Activated CD4-positive, alpha-beta T cell treated with anti-CD3 and anti-CD28 coated beads for 36 hours (primary cell): ENCODE measurements at regions of chr1 and their contacts with region 1.

Region 1: DNA sequence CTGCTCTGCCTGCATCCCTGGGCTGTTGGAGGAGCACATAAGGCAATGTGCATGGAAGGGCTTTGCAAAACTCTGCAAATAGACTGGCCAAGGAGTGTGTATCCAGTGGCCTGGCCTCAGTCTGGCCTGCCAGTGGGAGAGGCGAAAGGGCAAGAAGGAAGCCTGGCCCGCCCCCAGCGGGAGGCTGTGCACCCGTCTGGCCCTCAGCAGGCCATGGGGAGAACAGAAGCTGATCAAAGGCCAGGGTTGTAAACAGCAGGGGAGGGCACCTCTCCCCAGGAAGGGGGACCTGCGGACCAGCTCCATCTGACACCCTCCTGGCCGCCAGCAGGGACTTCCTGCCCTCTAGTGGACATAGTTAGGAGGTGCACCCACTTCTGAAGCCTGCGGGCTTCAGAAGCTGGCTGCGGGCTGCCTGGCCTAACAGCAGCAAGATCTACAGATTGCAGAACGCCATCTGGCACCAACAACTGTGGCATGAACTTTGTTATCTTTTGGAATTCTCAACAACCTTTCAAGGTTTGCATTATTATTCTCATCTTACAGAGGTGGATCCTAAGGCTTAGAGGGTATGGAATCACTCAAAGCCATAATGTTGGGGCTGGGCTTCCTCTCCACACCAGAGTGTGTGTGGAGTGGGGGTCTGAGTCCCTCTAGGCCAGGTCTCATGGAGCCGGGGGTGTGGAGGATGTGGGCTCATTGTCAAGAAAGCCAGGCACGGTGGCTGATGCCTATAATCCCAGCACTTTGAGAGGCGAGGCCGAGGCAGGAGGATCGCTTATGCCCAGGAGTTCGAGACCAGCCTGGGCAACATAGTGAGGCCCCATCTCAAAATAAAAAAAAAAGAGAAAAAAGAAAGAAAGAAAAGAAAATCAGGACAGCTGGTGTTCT is 18.9 kb upstream of the CDK18 start:
- DNase-seq: peak; percentile 78
- ATAC-seq: peak; percentile 69
- H3K4me3 Mint-ChIP-seq: no peak overlapping the region
- H3K27ac Mint-ChIP-seq: no peak overlapping the region
- H3K4me1 Mint-ChIP-seq: peaks cover 10% of the 10 kb centered on the region
- H3K27me3 Mint-ChIP-seq: peaks cover 40% of the 10 kb centered on the region

Region 2: DNA sequence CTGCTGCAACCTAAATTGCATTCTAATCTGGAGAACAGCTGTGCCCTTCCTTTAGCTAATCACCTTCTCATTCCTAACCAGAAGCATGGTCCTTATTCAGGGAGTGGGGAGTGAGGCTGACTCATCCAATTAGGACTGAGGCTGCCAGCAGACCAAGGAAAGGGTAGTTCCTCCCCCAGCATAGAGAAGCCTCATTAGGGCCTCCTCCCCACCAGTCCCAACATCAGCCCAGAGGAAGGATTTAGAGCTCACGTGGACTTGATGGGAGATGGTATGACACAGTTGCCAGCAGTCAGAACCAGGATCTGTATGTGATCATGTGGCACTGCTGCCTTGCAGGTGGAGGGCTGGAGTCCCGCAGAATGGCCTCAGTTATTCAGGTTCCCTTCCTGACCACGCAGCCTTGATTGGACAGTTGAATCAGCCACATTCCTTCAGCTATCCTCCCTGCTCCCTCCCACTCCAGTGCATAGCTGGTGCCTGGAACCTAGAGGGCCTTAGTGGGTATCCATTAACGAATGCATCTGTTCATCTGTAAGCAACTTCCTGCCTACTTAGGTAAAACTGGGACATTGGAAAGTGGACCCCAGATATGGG is 136.6 kb before region 1 on chr1:
- CTCF ChIA-PET with region 1: interaction called, 82 read pairs
- POLR2A ChIA-PET with region 1: no interaction called
- intact Hi-C with region 1: loop called (anchors 1 kb)
- DNase-seq: no peak
- ATAC-seq: no peak
- H3K4me3 Mint-ChIP-seq: no peak overlapping the region
- H3K27ac Mint-ChIP-seq: no peak overlapping the region
- H3K4me1 Mint-ChIP-seq: peaks cover 5% of the 10 kb centered on the region
- H3K27me3 Mint-ChIP-seq: peaks cover 20% of the 10 kb centered on the region

Region 3: GRCh38 chr1:205396967-205397616 is 88.5 kb before region 1 on chr1:
- CTCF ChIA-PET with region 1: interaction called, 79 read pairs
- POLR2A ChIA-PET with region 1: no interaction called
- intact Hi-C with region 1: loop called (anchors 1 kb)
- DNase-seq: peak; percentile 38
- ATAC-seq: peak; percentile 68
- H3K4me3 Mint-ChIP-seq: no peak overlapping the region
- H3K27ac Mint-ChIP-seq: no peak overlapping the region
- H3K4me1 Mint-ChIP-seq: no peaks in the 10 kb centered on the region
- H3K27me3 Mint-ChIP-seq: peaks cover 6% of the 10 kb centered on the region

Region 4: GRCh38 chr1:205440476-205441317 is 44.9 kb before region 1 on chr1:
- CTCF ChIA-PET with region 1: interaction called, 23 read pairs
- POLR2A ChIA-PET with region 1: no interaction called
- intact Hi-C with region 1: loop called in 1 of 2 experiments (anchors 5 kb)
- DNase-seq: peak; percentile 87
- ATAC-seq: peak; percentile 99
- H3K4me3 Mint-ChIP-seq: peak overlapping the region; percentile 70
- H3K27ac Mint-ChIP-seq: peak overlapping the region; percentile 87
- H3K4me1 Mint-ChIP-seq: peaks cover 17% of the 10 kb centered on the region
- H3K27me3 Mint-ChIP-seq: no peaks in the 10 kb centered on the region

Region 5: GRCh38 chr1:205512059-205513045 is 26.8 kb after region 1 on chr1:
- CTCF ChIA-PET with region 1: interaction called, 16 read pairs
- POLR2A ChIA-PET with region 1: no interaction called
- intact Hi-C with region 1: no loop called
- DNase-seq: no peak
- ATAC-seq: no peak
- H3K4me3 Mint-ChIP-seq: no peak overlapping the region
- H3K27ac Mint-ChIP-seq: no peak overlapping the region
- H3K4me1 Mint-ChIP-seq: no peaks in the 10 kb centered on the region
- H3K27me3 Mint-ChIP-seq: no peaks in the 10 kb centered on the region

Region 6: DNA sequence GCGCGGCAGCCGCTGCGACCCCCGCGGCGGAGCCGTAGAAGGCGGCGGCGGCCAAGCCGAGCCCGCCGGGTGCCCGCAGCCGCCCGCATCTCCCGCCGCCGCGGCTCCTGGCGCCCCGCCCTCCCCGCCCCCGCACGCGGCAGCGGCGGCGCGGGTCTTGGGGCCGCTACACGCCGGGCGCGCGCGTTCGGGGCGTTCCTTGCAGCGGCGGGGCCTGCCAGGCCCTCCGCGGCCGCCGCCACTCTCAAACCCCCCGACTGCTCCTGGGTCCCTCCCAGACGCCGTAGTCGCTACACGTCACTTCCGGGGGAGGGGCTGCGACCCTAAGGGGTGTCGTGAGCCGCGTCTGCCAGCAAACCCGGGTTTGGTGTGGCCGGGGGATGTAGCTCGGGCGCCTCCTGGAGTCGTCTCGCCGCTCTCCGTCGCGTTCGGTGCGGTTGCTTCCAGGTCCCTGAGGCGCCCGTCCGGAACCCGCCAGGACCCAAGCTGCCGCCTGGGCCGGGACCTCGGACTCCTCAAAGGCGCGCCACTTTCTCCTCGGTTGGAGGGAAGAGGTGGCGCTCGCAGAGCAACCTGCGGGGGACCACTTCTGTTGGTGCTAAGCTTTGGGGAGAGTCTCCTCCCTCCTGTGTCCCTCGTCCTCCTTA is 146.3 kb after region 1 on chr1 and contains the start of gene ELK4:
- CTCF ChIA-PET with region 1: no interaction called
- POLR2A ChIA-PET with region 1: no interaction called
- intact Hi-C with region 1: no loop called
- DNase-seq: peak; percentile 100
- ATAC-seq: peak; percentile 84
- H3K4me3 Mint-ChIP-seq: peak within 1 kb of the TSS; percentile 95
- H3K27ac Mint-ChIP-seq: peak within 1 kb of the TSS; percentile 99
- H3K4me1 Mint-ChIP-seq: peaks cover 32% of the 10 kb centered on the region
- H3K27me3 Mint-ChIP-seq: no peaks in the 10 kb centered on the region
- total RNA-seq, gene ELK4: 54.0 to 57.4 TPM

Region 7: GRCh38 chr1:205711104-205712020 is 225.8 kb after region 1 on chr1:
- CTCF ChIA-PET with region 1: no interaction called
- POLR2A ChIA-PET with region 1: no interaction called
- intact Hi-C with region 1: no loop called
- DNase-seq: peak; percentile 78
- ATAC-seq: peak; percentile 90
- H3K4me3 Mint-ChIP-seq: no peak overlapping the region
- H3K27ac Mint-ChIP-seq: peak overlapping the region; percentile 43
- H3K4me1 Mint-ChIP-seq: peaks cover 13% of the 10 kb centered on the region
- H3K27me3 Mint-ChIP-seq: no peaks in the 10 kb centered on the region